Common myeloid progenitor, CD34-positive (primary cell): ENCODE measurements at regions of chr5 and their contacts with region 1.

Region 1: DNA sequence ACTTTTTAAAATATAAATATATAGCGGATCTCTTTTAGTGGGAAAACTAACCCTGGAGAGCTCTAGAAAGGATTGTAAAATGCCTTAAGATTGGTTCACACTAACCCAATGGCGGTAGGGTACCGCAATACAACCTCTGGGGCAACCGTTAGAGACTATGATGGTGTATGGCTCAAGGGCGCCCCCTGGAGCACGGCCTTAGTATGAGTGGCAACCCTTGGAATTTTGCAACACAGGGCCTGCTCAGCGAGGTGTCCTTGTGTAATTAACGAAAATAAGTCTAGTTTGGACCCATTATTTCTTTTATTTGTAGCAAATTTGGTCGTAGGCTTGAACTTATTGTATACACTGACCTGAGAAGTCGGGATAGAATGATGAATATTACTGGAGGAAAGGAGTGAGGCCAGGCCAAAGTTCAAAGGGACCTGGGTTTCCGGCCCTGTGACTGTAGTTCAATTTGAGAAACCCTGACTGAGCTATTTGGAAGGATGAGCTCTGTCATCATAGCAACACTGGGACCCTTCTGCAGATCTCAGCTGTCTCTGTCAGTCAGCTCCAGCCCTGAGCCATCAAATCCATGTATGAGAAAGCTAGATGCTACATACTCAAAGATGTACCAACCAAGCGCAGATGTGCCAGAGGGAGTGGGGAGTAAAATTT is 54.8 kb downstream of the CAMK4 start:
- DNase-seq: peak; percentile 33 to 68 (median 58)
- H3K4me3 ChIP-seq: no peak overlapping the region
- H3K27ac ChIP-seq: no peak overlapping the region
- H3K4me1 ChIP-seq: no peaks in the 10 kb centered on the region
- H3K27me3 ChIP-seq: peaks cover 0 to 7% (median 2%) of the 10 kb centered on the region in 5 experiments

Region 2: DNA sequence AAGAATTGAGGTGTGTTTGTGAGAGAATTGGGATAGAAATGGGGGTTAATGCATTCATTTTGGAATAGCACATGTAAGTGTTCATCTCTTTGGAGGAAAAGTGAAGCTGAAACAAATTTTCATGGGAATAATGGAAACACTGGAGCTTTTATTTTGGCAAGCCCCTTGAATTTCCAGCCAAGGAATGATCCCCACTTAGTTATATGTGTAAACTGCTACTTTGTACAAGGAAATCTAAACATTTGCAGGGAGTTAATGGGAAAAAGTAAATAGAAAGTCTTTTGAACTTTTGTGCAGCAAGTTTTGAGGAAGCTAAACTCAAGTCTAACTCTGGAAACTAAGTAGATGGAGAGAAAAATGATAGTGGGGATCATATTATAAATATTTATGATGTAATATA is 10.7 kb before region 1 on chr5:
- CTCF ChIA-PET with region 1: interaction called, 11 read pairs
- POLR2A ChIA-PET with region 1: no interaction called
- DNase-seq: no peak
- H3K4me3 ChIP-seq: no peak overlapping the region
- H3K27ac ChIP-seq: no peak overlapping the region
- H3K4me1 ChIP-seq: no peaks in the 10 kb centered on the region
- H3K27me3 ChIP-seq: peaks cover 0 to 2% (median 0%) of the 10 kb centered on the region in 5 experiments